ENCODE measurements at regions of chr4 and their contacts with region 1.

Region 1: DNA sequence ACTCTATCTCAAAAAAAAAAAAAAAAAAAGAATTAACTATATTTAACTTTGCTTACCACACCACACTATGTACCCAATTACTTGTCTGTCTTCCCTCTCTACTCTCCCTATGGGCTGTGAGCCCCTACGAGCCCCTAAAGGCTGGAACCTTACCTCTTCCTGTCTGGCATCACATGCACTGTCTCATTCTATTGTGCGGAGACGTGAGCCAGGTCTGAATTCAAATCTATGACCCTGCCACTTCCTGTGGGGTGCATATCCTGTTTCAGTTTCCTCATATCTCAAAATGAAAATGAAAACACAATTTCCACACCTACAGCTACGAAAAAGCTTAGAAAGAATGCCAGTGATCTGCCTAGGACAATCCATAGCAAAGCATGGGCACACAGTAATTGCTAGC is 42.9 kb upstream of the HS3ST1 start:
- ATAC-seq: no peak
- H3K4me3 ChIP-seq: no peak overlapping the region
- H3K27ac ChIP-seq: no peak overlapping the region
- H3K4me1 ChIP-seq: peaks cover 6 to 9% of the 10 kb centered on the region in 2 donors

Region 2: GRCh38 chr4:11589676-11590075 is 118.1 kb after region 1 on chr4:
- in situ Hi-C with region 1: no loop called
- ATAC-seq: no peak
- H3K4me3 ChIP-seq: no peak overlapping the region
- H3K27ac ChIP-seq: no peak overlapping the region
- H3K4me1 ChIP-seq: no peaks in the 10 kb centered on the region

Region 3: DNA sequence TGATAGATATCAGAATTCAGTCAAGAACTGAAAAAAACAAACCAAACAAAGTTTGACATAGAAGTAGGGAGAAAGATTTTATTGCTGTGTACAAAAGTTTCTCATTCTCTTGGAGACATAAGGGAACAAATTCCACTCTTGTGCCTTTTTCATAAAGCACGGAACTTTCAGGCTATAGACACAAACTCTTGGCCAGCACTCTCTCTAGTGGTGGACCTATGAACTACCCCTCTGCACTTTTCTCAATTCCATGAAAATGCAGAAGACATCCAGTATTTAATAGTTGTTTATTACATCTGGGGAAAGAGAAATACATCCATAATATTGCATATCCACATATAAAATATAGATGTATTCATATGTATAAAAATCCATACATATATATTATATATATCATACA is 248.7 kb after region 1 on chr4:
- in situ Hi-C with region 1: loop called in 1 of 9 experiments (anchors 25 kb)
- ATAC-seq: peak in 3 of 8 experiments; percentile 39 to 66 (median 50)
- H3K4me3 ChIP-seq: no peak overlapping the region
- H3K27ac ChIP-seq: no peak overlapping the region
- H3K4me1 ChIP-seq: no peaks in the 10 kb centered on the region

Region 4: GRCh38 chr4:12458621-12459020 is 987.0 kb after region 1 on chr4:
- in situ Hi-C with region 1: no loop called
- ATAC-seq: no peak
- H3K4me3 ChIP-seq: no peak overlapping the region
- H3K27ac ChIP-seq: no peak overlapping the region
- H3K4me1 ChIP-seq: no peaks in the 10 kb centered on the region